IMR-90 (cell line): ENCODE measurements at regions of chr1 and their contacts with region 1.

Region 1: DNA sequence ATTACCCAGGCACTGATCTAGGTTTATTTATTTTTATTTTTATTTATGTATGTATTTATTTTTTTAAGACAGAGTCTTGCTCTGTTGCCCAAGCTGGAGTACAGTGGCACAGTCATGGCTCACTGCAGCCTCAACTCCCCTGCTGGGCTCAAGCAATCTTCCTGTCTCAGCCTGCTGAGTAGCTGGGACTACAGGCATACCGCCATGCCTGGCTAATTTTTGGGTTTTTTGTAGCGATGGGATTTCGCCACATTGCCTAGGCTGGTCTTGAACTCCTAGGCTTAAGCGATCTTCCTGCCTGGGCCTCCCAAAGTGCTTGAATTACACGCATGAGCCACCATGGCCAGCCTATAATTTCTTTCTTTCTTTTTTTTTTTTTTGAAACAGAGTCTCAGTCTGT is 9.4 kb downstream of the PHACTR4 start:
- DNase-seq: no peak
- ATAC-seq: no peak
- H3K4me3 ChIP-seq: no peak overlapping the region
- H3K27ac ChIP-seq: no peak overlapping the region
- H3K4me1 ChIP-seq: 0 out of 2 replicates have a peak, but pooled peaks cover 2% of the 10 kb centered on the region
- H3K27me3 ChIP-seq: no peaks in the 10 kb centered on the region
- CTCF ChIP-seq: no peak
- POLR2A ChIP-seq: no peak
- RAD21 ChIP-seq: no peak

Region 2: DNA sequence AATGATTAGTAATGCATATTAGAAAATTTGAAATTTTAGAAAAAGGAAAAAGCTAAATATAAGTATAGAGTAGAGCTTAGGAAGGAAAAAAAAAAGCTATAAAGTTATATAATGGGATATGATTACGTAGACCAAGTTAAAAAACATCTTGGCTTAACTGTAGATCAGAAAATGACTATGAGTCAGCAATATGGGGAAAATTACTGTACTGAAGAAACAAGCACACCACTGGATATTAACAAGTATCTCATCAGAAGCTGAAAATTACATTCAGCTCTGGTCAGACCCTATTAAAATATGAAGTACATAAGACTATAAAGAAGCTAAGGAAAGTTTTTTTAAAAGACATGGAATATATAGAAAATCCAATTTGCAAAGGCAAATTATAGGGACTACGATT is 165.6 kb before region 1 on chr1:
- CTCF ChIA-PET with region 1: no interaction called
- POLR2A ChIA-PET with region 1: no interaction called
- dilution Hi-C with region 1: no loop called
- in situ Hi-C with region 1: no loop called
- intact Hi-C with region 1: no loop called
- DNase-seq: no peak
- ATAC-seq: no peak
- H3K4me3 ChIP-seq: no peak overlapping the region
- H3K27ac ChIP-seq: no peak overlapping the region
- H3K4me1 ChIP-seq: no peaks in the 10 kb centered on the region
- H3K27me3 ChIP-seq: no peaks in the 10 kb centered on the region
- CTCF ChIP-seq: no peak
- POLR2A ChIP-seq: no peak
- RAD21 ChIP-seq: no peak

Region 3: DNA sequence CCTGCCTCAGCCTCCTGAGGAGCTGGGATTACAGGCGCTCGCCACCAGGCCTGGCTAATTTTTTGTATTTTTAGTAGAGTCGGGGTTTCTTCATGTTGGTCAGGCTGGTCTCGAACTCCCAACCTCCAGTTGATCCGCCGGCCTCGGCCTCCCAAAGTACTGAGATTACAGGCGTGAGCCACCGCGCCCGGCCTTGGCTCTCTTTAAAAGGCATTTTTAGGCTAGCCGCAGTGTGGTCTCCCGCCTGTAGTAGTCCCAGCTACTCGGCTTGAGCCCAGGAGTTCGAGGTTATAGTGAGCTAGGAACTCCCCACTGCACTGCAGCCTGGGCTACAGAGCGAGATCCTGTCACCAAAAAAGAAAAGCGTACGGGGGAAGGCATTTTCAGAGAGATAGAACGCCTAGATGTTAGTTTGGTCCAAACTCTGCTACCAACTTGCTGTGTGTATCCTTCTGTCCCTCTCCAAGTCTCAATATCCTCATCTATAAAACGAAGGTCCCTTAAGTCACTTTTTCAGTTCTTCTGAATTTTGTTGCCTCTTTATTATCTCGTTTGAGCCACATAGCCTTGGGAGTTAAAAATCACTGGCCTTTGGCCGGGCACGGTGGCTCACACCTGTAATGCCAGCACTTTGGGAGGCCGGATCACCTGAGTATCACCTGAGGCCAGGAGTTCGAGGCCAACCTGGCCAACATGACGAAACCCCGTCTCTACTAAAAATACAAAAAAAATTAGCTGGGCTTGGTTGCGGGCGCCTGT is 49.3 kb before region 1 on chr1:
- CTCF ChIA-PET with region 1: no interaction called
- POLR2A ChIA-PET with region 1: no interaction called
- dilution Hi-C with region 1: no loop called
- in situ Hi-C with region 1: no loop called
- intact Hi-C with region 1: no loop called
- DNase-seq: peak; percentile 21
- ATAC-seq: peak; percentile 16
- H3K4me3 ChIP-seq: peak overlapping the region; percentile 60
- H3K27ac ChIP-seq: peak overlapping the region; percentile 72
- H3K4me1 ChIP-seq: no peaks in the 10 kb centered on the region
- H3K27me3 ChIP-seq: no peaks in the 10 kb centered on the region
- CTCF ChIP-seq: 0 out of 2 replicates have a peak, but pooled peaks have one; percentile 4
- POLR2A ChIP-seq: no peak
- RAD21 ChIP-seq: no peak

Region 4: GRCh38 chr1:28365864-28366263 is 13.0 kb before region 1 on chr1:
- CTCF ChIA-PET with region 1: no interaction called
- POLR2A ChIA-PET with region 1: no interaction called
- dilution Hi-C with region 1: no loop called
- in situ Hi-C with region 1: no loop called
- intact Hi-C with region 1: no loop called
- DNase-seq: no peak
- ATAC-seq: no peak
- H3K4me3 ChIP-seq: no peak overlapping the region
- H3K27ac ChIP-seq: no peak overlapping the region
- H3K4me1 ChIP-seq: 0 out of 2 replicates have a peak, but pooled peaks cover 2% of the 10 kb centered on the region
- H3K27me3 ChIP-seq: peaks cover 5% of the 10 kb centered on the region
- CTCF ChIP-seq: no peak
- POLR2A ChIP-seq: no peak
- RAD21 ChIP-seq: no peak

Region 5: DNA sequence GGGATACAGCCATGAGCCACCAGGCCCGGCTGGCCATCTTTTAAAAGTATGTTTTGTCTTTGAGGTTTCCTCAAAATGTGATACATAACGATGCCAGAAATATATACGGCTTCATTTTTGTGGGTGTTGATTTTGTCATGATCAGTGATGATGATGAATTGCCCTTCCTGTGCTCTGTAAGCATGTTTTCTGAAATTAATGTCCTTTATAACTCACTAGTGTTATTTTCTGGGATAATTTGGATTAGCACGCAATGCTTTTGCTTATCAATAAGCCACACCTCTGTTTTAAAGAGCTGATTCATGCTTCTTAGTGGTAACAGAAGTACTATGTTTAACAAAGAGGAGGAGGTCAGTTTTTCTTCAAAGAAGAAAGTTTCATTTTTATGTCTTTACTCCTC is 16.3 kb after region 1 on chr1:
- CTCF ChIA-PET with region 1: interaction called, 5 read pairs
- POLR2A ChIA-PET with region 1: interaction called, 11 read pairs
- dilution Hi-C with region 1: no loop called
- in situ Hi-C with region 1: no loop called
- intact Hi-C with region 1: no loop called
- DNase-seq: peak; percentile 29
- ATAC-seq: no peak
- H3K4me3 ChIP-seq: no peak overlapping the region
- H3K27ac ChIP-seq: no peak overlapping the region
- H3K4me1 ChIP-seq: peaks cover 2% of the 10 kb centered on the region; the same call in 1 of the 2 replicates
- H3K27me3 ChIP-seq: no peaks in the 10 kb centered on the region
- CTCF ChIP-seq: no peak
- POLR2A ChIP-seq: no peak
- RAD21 ChIP-seq: no peak